Panc1 (cell line): ENCODE measurements at regions of chr16 and their contacts with region 1.

Region 1: GRCh38 chr16:15777533-15778203 is 79.2 kb downstream of the MYH11 start:
- DNase-seq: peak; percentile 51
- ATAC-seq: peak; percentile 94
- H3K4me3 ChIP-seq: no peak overlapping the region
- H3K27ac ChIP-seq: no peak overlapping the region
- H3K4me1 ChIP-seq: no peaks in the 10 kb centered on the region; the same call in 1 of the 2 replicates
- H3K27me3 ChIP-seq: no peaks in the 10 kb centered on the region; the same call in 1 of the 2 replicates
- CTCF ChIP-seq: peak; percentile 97

Region 2: GRCh38 chr16:15539197-15539596 is 238.5 kb before region 1 on chr16:
- CTCF ChIA-PET with region 1: no interaction called
- POLR2A ChIA-PET with region 1: no interaction called
- in situ Hi-C with region 1: no loop called
- intact Hi-C with region 1: no loop called
- DNase-seq: no peak
- ATAC-seq: peak; percentile 28; the same call in 1 of the 2 replicates
- H3K4me3 ChIP-seq: no peak overlapping the region
- H3K27ac ChIP-seq: no peak overlapping the region
- H3K4me1 ChIP-seq: no peaks in the 10 kb centered on the region
- H3K27me3 ChIP-seq: no peaks in the 10 kb centered on the region
- CTCF ChIP-seq: no peak

Region 3: GRCh38 chr16:15726715-15727114 is 51.0 kb before region 1 on chr16:
- CTCF ChIA-PET with region 1: no interaction called
- POLR2A ChIA-PET with region 1: no interaction called
- in situ Hi-C with region 1: no loop called
- intact Hi-C with region 1: no loop called
- DNase-seq: no peak
- ATAC-seq: no peak
- H3K4me3 ChIP-seq: no peak overlapping the region
- H3K27ac ChIP-seq: no peak overlapping the region
- H3K4me1 ChIP-seq: no peaks in the 10 kb centered on the region
- H3K27me3 ChIP-seq: no peaks in the 10 kb centered on the region
- CTCF ChIP-seq: no peak

Region 4: DNA sequence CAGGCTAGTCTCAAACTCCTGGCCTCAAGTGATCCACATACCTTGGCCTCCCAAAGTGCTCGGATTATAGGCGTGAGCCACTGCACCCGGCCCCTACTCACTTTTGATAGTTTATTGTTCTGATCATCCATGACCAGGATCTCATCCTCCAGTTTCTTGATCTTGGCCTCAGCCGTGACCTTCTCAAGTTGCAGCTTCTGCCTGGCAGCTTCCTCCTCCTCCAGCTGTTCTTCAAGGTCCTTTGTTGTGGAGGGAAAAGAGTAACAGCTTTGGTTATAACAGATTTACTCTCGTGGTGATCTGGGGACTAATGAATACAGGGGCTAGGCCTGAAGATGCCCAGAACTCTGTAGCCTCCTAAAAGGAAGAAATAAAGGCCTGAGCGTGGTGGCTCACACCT is 37.7 kb before region 1 on chr16:
- CTCF ChIA-PET with region 1: no interaction called
- POLR2A ChIA-PET with region 1: no interaction called
- in situ Hi-C with region 1: no loop called
- intact Hi-C with region 1: no loop called
- DNase-seq: no peak
- ATAC-seq: no peak
- H3K4me3 ChIP-seq: no peak overlapping the region
- H3K27ac ChIP-seq: no peak overlapping the region
- H3K4me1 ChIP-seq: no peaks in the 10 kb centered on the region
- H3K27me3 ChIP-seq: no peaks in the 10 kb centered on the region
- CTCF ChIP-seq: no peak

Region 5: DNA sequence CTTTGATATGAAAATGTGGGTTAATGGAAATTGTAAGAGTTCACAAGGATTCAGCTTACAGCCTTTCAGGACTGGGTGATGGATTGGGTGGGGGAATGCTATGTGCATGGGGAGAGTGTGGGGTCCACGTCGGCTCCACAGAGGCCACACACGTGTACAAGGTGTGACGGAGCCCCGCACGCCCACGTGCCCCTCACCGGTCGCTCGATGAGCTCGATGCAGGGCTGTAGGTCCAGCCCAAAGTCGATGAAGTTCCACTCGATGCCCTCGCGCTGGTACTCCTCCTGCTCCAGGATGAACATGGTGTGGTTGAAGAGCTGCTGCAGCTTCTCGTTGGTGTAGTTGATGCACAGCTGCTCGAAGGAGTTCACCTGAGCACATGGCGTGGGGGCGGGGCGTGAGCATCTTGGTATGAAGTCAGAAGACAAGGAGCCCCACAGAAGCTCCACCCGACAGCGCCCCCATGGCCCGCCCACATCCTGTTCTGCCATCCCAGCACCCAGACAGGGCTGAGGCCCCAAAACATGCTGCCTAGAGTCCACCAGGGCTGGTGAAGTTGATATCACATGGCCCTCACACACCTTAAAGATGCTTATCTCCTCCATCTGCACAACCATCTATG is 19.9 kb before region 1 on chr16:
- CTCF ChIA-PET with region 1: interaction called, 10 read pairs
- POLR2A ChIA-PET with region 1: no interaction called
- in situ Hi-C with region 1: no loop called
- intact Hi-C with region 1: no loop called
- DNase-seq: no peak
- ATAC-seq: no peak
- H3K4me3 ChIP-seq: no peak overlapping the region
- H3K27ac ChIP-seq: no peak overlapping the region
- H3K4me1 ChIP-seq: no peaks in the 10 kb centered on the region
- H3K27me3 ChIP-seq: no peaks in the 10 kb centered on the region
- CTCF ChIP-seq: no peak

Region 6: DNA sequence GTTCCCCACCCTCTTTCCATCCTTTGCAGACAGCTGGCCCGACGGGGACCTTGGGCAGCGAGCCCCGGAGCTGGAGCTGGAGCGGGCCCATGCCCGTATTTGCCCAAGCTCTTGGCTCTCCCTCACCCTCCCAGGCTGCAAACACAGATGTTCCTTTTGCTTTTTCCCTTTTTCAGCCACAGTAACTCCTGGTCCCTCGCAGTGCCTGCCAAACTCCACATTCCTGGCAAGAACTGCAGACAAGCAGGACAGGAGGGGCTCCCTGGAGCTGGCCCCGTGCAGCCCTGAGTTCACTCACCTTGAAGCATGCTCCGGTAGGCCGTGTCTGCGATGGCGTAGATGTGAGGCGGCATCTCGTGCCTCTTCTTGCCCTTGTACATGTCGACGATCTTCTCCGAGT is 45.3 kb after region 1 on chr16:
- CTCF ChIA-PET with region 1: interaction called, 23 read pairs
- POLR2A ChIA-PET with region 1: no interaction called
- in situ Hi-C with region 1: loop called (anchors 5 kb)
- intact Hi-C with region 1: loop called (anchors 5 kb)
- DNase-seq: no peak
- ATAC-seq: peak; percentile 39; the same call in 1 of the 2 replicates
- H3K4me3 ChIP-seq: no peak overlapping the region
- H3K27ac ChIP-seq: no peak overlapping the region
- H3K4me1 ChIP-seq: no peaks in the 10 kb centered on the region
- H3K27me3 ChIP-seq: no peaks in the 10 kb centered on the region
- CTCF ChIP-seq: no peak

Region 7: GRCh38 chr16:16021988-16022682 is 244.5 kb after region 1 on chr16:
- CTCF ChIA-PET with region 1: no interaction called
- POLR2A ChIA-PET with region 1: no interaction called
- in situ Hi-C with region 1: no loop called
- intact Hi-C with region 1: loop called (anchors 5 kb)
- DNase-seq: peak; percentile 96
- ATAC-seq: peak; percentile 93
- H3K4me3 ChIP-seq: peak overlapping the region in 1 of 2 experiments; percentile 18; a peak in 1 of 4 replicates
- H3K27ac ChIP-seq: peak overlapping the region; percentile 95
- H3K4me1 ChIP-seq: peaks cover 88% of the 10 kb centered on the region
- H3K27me3 ChIP-seq: no peaks in the 10 kb centered on the region
- CTCF ChIP-seq: no peak

Region 8: GRCh38 chr16:16143038-16143763 is 365.5 kb after region 1 on chr16:
- CTCF ChIA-PET with region 1: no interaction called
- POLR2A ChIA-PET with region 1: no interaction called
- in situ Hi-C with region 1: no loop called
- intact Hi-C with region 1: no loop called
- DNase-seq: no peak
- ATAC-seq: peak; percentile 32; the same call in 1 of the 2 replicates
- H3K4me3 ChIP-seq: no peak overlapping the region
- H3K27ac ChIP-seq: no peak overlapping the region
- H3K4me1 ChIP-seq: peaks cover 10% of the 10 kb centered on the region
- H3K27me3 ChIP-seq: no peaks in the 10 kb centered on the region
- CTCF ChIP-seq: no peak; the same call in 1 of the 2 replicates

Region 9: GRCh38 chr16:16191493-16192167 is 414.0 kb after region 1 on chr16:
- CTCF ChIA-PET with region 1: no interaction called
- POLR2A ChIA-PET with region 1: no interaction called
- in situ Hi-C with region 1: no loop called
- intact Hi-C with region 1: loop called (anchors 10 kb)
- DNase-seq: no peak
- ATAC-seq: no peak
- H3K4me3 ChIP-seq: no peak overlapping the region
- H3K27ac ChIP-seq: no peak overlapping the region
- H3K4me1 ChIP-seq: no peaks in the 10 kb centered on the region
- H3K27me3 ChIP-seq: no peaks in the 10 kb centered on the region
- CTCF ChIP-seq: no peak